ENCODE measurements at regions of chr10 and their contacts with region 1.

Region 1: GRCh38 chr10:72337020-72337629 is 17.6 kb downstream of the DNAJB12 start:
- DNase-seq: no peak
- H3K4me3 ChIP-seq: no peak overlapping the region
- H3K27me3 ChIP-seq: no peaks in the 10 kb centered on the region
- CTCF ChIP-seq: peak; percentile 95

Region 2: DNA sequence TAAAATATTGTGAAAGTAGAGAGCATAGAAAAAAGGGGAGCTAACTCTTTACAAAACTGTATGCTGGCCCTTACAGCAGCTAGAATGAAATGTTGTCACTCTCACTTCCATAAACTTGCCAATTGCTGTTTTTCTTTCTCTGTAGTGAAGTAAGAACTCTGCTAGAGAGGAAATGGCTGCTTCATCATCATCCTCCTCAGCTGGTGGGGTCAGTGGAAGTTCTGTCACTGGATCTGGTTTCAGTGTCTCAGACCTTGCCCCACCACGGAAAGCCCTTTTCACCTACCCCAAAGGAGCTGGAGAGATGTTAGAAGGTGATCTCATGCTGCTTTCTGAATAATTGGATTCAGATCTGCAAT is 113.4 kb before region 1 on chr10:
- CTCF ChIA-PET with region 1: interaction called, 11 read pairs
- POLR2A ChIA-PET with region 1: no interaction called
- DNase-seq: no peak
- H3K4me3 ChIP-seq: no peak overlapping the region
- H3K27me3 ChIP-seq: no peaks in the 10 kb centered on the region
- CTCF ChIP-seq: no peak

Region 3: DNA sequence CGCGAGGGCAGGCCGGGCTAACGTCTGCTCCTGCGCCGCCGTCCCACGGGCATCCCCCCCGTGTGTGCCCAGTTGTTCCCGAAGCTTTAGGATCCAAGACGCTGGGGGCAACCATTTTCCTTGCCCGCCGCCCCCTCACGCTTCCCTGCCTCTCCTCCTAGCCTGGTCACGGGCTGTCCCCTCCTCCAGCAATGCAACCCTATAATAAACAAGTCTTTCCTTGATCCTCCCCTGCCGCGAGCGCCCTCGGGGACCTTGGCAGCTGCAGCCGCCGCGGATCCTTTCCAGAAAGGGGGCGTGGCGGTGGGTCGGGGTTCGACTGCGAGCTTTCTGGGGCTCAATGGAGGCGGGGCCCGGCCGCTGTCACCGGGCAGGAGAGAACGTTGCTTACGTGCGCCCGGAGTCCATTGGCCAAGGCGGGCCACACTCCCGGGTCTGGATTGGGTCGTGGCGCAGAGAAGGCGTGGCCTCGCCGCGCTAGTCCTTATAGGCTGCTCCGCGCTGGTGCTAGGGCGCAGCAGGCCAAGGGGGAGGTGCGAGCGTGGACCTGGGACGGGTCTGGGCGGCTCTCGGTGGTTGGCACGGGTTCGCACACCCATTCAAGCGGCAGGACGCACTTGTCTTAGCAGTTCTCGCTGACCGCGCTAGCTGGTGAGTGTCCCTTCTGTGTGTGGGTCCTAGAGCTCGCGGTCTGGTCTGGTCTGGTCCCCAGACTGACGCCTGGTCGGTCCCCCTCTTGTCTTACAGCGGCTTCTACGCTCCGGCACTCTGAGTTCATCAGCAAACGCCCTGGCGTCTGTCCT is 63.5 kb before region 1 on chr10 and contains the start of gene DDIT4:
- CTCF ChIA-PET with region 1: interaction called, 14 read pairs
- POLR2A ChIA-PET with region 1: interaction called, 4 read pairs
- DNase-seq: peak; percentile 97
- H3K4me3 ChIP-seq: peak within 1 kb of the TSS; percentile 89
- H3K27me3 ChIP-seq: no peaks in the 10 kb centered on the region
- CTCF ChIP-seq: no peak
- polyA plus RNA-seq, gene DDIT4: 152 and 174 TPM in 2 replicates

Region 4: DNA sequence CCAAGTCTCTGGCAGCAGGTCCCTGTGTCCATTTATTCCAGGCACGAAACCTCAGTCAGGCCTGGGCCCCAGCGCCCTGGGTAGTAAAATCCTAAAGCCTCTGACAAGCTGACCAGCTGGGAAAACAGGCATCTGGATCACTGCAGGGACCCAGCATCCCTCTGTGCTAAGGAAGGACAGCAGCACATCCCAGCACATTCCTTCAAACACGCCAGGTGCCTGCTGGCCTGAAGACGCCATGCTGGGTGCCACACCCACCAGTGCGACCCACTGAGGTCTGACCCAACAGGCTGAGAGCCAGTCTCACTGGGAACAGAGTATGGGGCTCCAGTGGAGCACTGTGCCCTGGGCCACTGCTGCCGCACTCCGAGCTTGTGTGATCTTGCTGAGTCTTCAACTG is 11.2 kb after region 1 on chr10:
- CTCF ChIA-PET with region 1: interaction called, 21 read pairs
- POLR2A ChIA-PET with region 1: no interaction called
- DNase-seq: no peak
- H3K4me3 ChIP-seq: no peak overlapping the region
- H3K27me3 ChIP-seq: no peaks in the 10 kb centered on the region
- CTCF ChIP-seq: no peak

Region 5: GRCh38 chr10:72625608-72626443 is 288.7 kb after region 1 on chr10 and contains the start of gene MICU1:
- CTCF ChIA-PET with region 1: no interaction called
- POLR2A ChIA-PET with region 1: no interaction called
- DNase-seq: peak; percentile 74
- H3K4me3 ChIP-seq: peak within 1 kb of the TSS; percentile 81
- H3K27me3 ChIP-seq: no peaks in the 10 kb centered on the region
- CTCF ChIP-seq: no peak
- polyA plus RNA-seq, gene MICU1: 40.4 and 42.4 TPM in 2 replicates